PC-9 (cell line): ENCODE measurements at regions of chr11 and their contacts with region 1.

Region 1: GRCh38 chr11:57249384-57250319 is 12.6 kb upstream of the APLNR start:
- DNase-seq: peak; percentile 67 to 69
- H3K4me3 ChIP-seq: no peak overlapping the region
- H3K27ac ChIP-seq: peak overlapping the region; percentile 40; the same call in 1 of the 2 replicates
- H3K4me1 ChIP-seq: peaks cover 17% of the 10 kb centered on the region
- H3K27me3 ChIP-seq: no peaks in the 10 kb centered on the region
- CTCF ChIP-seq: peak; percentile 90

Region 2: DNA sequence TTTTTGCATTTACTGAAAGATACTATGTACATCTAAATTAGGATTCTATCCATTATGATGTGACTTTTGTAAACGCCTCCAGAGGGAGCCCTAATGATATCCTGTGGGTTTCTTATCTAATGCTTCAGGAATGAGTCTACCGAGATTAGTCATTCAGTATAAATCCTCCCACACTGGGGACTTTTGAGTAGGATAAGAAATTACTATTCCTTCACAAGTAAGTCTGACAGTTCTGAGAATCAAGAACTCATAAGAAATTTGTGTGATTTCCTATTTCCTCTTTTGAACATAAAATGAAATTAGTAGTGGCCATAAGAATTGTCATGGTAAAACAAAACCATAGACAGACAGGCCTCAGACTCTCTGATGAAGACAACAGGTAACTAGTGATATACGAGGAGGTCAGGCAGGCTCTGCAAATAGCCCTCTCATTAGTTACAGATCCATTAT is 625.0 kb before region 1 on chr11:
- CTCF ChIA-PET with region 1: no interaction called
- POLR2A ChIA-PET with region 1: no interaction called
- intact Hi-C with region 1: loop called (anchors 10 kb)
- DNase-seq: peak; percentile 5 to 69
- H3K4me3 ChIP-seq: no peak overlapping the region
- H3K27ac ChIP-seq: no peak overlapping the region
- H3K4me1 ChIP-seq: no peaks in the 10 kb centered on the region
- H3K27me3 ChIP-seq: peaks cover 10% of the 10 kb centered on the region; the same call in 1 of the 2 replicates
- CTCF ChIP-seq: peak; percentile 69

Region 3: DNA sequence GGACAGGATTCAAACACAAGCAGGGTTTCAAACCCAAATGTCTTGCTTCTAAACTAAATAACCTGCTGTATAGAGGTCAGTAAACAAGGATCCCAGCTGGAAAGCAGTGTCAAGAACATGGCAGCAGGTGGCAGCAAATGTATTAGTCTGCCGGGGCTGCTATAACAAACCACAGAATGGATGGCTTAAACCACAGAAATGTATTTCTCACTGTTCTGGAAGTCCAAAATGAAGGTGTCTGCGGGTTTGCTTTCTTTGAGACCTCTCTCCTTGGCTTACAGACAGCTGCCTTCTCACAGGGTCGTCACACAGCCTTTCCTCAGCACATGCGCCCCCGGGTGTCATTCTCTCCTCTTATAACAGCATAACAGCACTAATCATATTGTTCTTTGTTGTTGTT is 133.0 kb before region 1 on chr11:
- CTCF ChIA-PET with region 1: no interaction called
- POLR2A ChIA-PET with region 1: interaction called, 5 read pairs
- intact Hi-C with region 1: loop called (anchors 1 kb)
- DNase-seq: peak; percentile 34 to 65
- H3K4me3 ChIP-seq: no peak overlapping the region
- H3K27ac ChIP-seq: no peak overlapping the region
- H3K4me1 ChIP-seq: peaks cover 8% of the 10 kb centered on the region
- H3K27me3 ChIP-seq: no peaks in the 10 kb centered on the region
- CTCF ChIP-seq: peak; percentile 86

Region 4: DNA sequence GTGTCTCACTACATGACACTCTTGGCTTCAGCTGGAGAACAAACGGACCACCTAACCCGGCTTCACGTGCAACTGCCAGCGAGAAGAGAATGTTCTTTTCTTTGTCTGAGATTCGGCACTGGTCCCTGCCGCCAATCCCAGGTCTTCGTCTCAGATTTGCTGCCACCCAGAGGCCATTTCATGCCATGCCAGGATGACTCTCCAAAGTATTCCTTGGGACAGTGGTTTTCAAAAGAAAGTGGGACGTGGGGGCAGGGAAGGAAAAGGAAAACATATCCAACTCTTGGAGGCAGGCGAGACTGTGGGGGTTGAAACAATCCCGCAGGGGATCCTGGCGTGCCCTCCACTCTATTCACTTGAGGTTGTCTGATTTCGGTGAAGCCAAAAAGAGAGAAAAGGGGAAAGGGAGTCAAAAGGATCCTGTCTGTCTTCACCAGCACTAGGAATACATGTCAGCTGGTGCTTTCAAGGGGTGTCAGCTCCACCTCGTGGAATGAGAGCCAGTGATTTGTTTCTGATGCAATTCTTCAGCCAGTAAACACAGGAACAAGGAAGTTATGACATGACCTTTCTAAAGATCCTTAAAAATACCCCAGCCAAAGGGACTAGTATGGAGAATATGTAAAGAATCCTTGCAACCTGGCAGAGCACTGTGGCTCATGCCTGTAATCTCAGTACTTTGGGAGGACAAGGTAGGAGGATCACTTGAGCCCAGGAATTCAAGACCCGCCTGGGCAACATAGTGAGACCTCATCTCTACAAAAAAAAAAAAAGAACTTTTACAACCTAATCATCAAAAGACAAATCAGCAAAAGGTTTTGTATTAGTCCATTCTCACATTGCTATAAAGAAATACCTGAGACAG is 28.4 kb after region 1 on chr11:
- CTCF ChIA-PET with region 1: interaction called, 6 read pairs
- POLR2A ChIA-PET with region 1: no interaction called
- intact Hi-C with region 1: loop called (anchors 1 kb)
- DNase-seq: peak; percentile 78 to 94
- H3K4me3 ChIP-seq: peak overlapping the region; percentile 49
- H3K27ac ChIP-seq: peak overlapping the region; percentile 90
- H3K4me1 ChIP-seq: peaks cover 38% of the 10 kb centered on the region
- H3K27me3 ChIP-seq: no peaks in the 10 kb centered on the region
- CTCF ChIP-seq: peak; percentile 89

Region 5: GRCh38 chr11:57426929-57427726 is 177.5 kb after region 1 on chr11 and contains the start of gene SLC43A3:
- CTCF ChIA-PET with region 1: no interaction called
- POLR2A ChIA-PET with region 1: no interaction called
- intact Hi-C with region 1: no loop called
- DNase-seq: peak; percentile 77 to 93
- H3K4me3 ChIP-seq: peak within 1 kb of the TSS; percentile 73
- H3K27ac ChIP-seq: peak within 1 kb of the TSS; percentile 91
- H3K4me1 ChIP-seq: peaks cover 44% of the 10 kb centered on the region
- H3K27me3 ChIP-seq: no peaks in the 10 kb centered on the region
- CTCF ChIP-seq: no peak
- total RNA-seq, gene SLC43A3: 35.7 and 41.3 TPM in 2 replicates